ENCODE measurements at regions of chr17 and their contacts with region 1.

Region 1: GRCh38 chr17:3913531-3914311 is 2.5 kb downstream of the P2RX1 start:
- DNase-seq: peak; percentile 87
- ATAC-seq: peak; percentile 64
- H3K4me3 Mint-ChIP-seq: peak overlapping the region; percentile 82
- H3K27ac Mint-ChIP-seq: peak overlapping the region; percentile 96
- H3K4me1 Mint-ChIP-seq: peaks cover 90% of the 10 kb centered on the region
- H3K27me3 Mint-ChIP-seq: no peaks in the 10 kb centered on the region
- CTCF ChIP-seq: peak; percentile 55

Region 2: GRCh38 chr17:3558603-3559269 is 355.0 kb before region 1 on chr17:
- CTCF ChIA-PET with region 1: no interaction called
- POLR2A ChIA-PET with region 1: interaction called, 4 read pairs
- intact Hi-C with region 1: loop called (anchors 5 kb)
- DNase-seq: peak; percentile 64
- ATAC-seq: peak; percentile 73
- H3K4me3 Mint-ChIP-seq: peak overlapping the region; percentile 61
- H3K27ac Mint-ChIP-seq: peak overlapping the region; percentile 88
- H3K4me1 Mint-ChIP-seq: peaks cover 49% of the 10 kb centered on the region
- H3K27me3 Mint-ChIP-seq: peaks cover 6% of the 10 kb centered on the region
- CTCF ChIP-seq: no peak

Region 3: DNA sequence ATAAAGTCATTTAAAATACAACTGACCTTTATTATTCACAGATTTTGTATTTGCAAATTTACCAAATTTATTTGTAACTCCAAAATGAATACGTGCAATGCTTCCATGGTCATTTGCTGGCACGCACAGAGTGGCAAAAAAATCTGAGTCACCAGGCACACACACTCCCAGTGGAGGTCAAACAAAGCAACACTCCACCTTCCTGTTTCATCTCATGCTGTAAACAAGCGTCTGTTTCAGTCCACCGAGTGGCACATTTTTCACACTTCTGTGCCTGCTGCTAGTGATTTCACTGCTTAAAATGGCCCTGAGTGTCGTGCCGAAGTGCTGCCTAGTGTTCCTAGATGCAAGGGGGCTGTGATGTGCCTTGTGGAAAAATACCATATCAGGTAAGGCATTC is 94.9 kb before region 1 on chr17:
- CTCF ChIA-PET with region 1: no interaction called
- POLR2A ChIA-PET with region 1: no interaction called
- intact Hi-C with region 1: no loop called
- DNase-seq: no peak
- ATAC-seq: peak; percentile 65
- H3K4me3 Mint-ChIP-seq: no peak overlapping the region
- H3K27ac Mint-ChIP-seq: peak overlapping the region; percentile 65
- H3K4me1 Mint-ChIP-seq: peaks cover 29% of the 10 kb centered on the region
- H3K27me3 Mint-ChIP-seq: no peaks in the 10 kb centered on the region
- CTCF ChIP-seq: no peak

Region 4: GRCh38 chr17:3845621-3846441 is 67.9 kb before region 1 on chr17 and contains the start of gene NCBP3:
- CTCF ChIA-PET with region 1: interaction called, 16 read pairs
- POLR2A ChIA-PET with region 1: interaction called, 14 read pairs
- intact Hi-C with region 1: loop called (anchors 2 kb)
- DNase-seq: peak; percentile 92
- ATAC-seq: peak; percentile 96
- H3K4me3 Mint-ChIP-seq: peak within 1 kb of the TSS; percentile 92
- H3K27ac Mint-ChIP-seq: peak within 1 kb of the TSS; percentile 83
- H3K4me1 Mint-ChIP-seq: peaks cover 21% of the 10 kb centered on the region
- H3K27me3 Mint-ChIP-seq: peaks cover 2% of the 10 kb centered on the region
- CTCF ChIP-seq: no peak
- total RNA-seq, gene NCBP3: 49.5 TPM in 2 replicates

Region 5: DNA sequence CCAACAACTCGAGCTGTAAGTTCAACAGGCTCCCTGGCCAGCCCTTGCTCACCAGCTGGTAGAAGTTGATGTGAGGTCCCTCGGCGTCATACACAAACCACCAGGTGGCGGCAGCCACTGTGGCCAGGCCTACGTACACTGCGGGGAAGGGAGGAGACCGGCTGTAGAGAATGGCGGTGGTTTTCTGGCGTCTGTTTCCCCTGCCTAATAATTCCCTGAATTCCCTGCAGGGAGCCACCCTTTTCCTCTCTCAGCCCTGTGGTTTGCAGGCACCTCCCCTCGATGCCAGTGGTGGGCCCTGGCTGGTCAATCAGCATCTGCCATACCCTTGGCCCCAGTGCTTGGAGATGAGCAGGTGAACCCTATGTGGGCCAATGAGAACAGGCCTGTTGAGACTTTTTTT is 21.4 kb after region 1 on chr17:
- CTCF ChIA-PET with region 1: interaction called, 12 read pairs
- POLR2A ChIA-PET with region 1: interaction called, 11 read pairs
- intact Hi-C with region 1: no loop called
- DNase-seq: no peak
- ATAC-seq: peak; percentile 84
- H3K4me3 Mint-ChIP-seq: no peak overlapping the region
- H3K27ac Mint-ChIP-seq: peak overlapping the region; percentile 59
- H3K4me1 Mint-ChIP-seq: no peaks in the 10 kb centered on the region
- H3K27me3 Mint-ChIP-seq: no peaks in the 10 kb centered on the region
- CTCF ChIP-seq: no peak

Region 6: DNA sequence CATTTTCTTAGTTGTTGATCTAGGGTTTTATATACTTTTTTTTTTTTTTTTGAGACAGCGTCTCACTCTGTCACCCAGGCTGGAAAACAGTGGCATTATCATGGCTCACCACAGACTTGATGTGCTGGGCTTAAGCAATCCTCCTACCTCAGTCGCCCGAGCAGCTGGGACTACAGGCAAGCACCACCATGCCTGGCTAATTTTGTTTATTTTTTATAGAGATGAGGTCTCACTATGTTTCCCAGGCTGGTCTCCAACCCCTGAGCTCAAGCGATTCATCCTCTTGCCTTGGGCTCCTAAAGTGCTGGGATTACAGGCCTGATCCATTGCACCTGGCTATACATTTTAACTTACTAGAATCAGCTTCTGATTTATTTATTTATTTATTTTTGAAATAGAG is 84.7 kb after region 1 on chr17:
- CTCF ChIA-PET with region 1: interaction called, 65 read pairs
- POLR2A ChIA-PET with region 1: interaction called, 21 read pairs
- intact Hi-C with region 1: no loop called
- DNase-seq: no peak
- ATAC-seq: no peak
- H3K4me3 Mint-ChIP-seq: no peak overlapping the region
- H3K27ac Mint-ChIP-seq: no peak overlapping the region
- H3K4me1 Mint-ChIP-seq: peaks cover 13% of the 10 kb centered on the region
- H3K27me3 Mint-ChIP-seq: no peaks in the 10 kb centered on the region
- CTCF ChIP-seq: no peak

Region 7: GRCh38 chr17:4143563-4144421 is 230.1 kb after region 1 on chr17:
- CTCF ChIA-PET with region 1: no interaction called
- POLR2A ChIA-PET with region 1: interaction called, 14 read pairs
- intact Hi-C with region 1: loop called (anchors 5 kb)
- DNase-seq: peak; percentile 84
- ATAC-seq: peak; percentile 70
- H3K4me3 Mint-ChIP-seq: peak overlapping the region; percentile 98
- H3K27ac Mint-ChIP-seq: peak overlapping the region; percentile 99
- H3K4me1 Mint-ChIP-seq: peaks cover 37% of the 10 kb centered on the region
- H3K27me3 Mint-ChIP-seq: no peaks in the 10 kb centered on the region
- CTCF ChIP-seq: no peak